Activated naive CD4-positive, alpha-beta T cell treated with anti-CD3 and anti-CD28 coated beads, Interleukin-2, amount 10 ng/mL, durations not matched to agents 7 days and 5 days (primary cell): ENCODE measurements at regions of chr9 and their contacts with region 1.

Region 1: DNA sequence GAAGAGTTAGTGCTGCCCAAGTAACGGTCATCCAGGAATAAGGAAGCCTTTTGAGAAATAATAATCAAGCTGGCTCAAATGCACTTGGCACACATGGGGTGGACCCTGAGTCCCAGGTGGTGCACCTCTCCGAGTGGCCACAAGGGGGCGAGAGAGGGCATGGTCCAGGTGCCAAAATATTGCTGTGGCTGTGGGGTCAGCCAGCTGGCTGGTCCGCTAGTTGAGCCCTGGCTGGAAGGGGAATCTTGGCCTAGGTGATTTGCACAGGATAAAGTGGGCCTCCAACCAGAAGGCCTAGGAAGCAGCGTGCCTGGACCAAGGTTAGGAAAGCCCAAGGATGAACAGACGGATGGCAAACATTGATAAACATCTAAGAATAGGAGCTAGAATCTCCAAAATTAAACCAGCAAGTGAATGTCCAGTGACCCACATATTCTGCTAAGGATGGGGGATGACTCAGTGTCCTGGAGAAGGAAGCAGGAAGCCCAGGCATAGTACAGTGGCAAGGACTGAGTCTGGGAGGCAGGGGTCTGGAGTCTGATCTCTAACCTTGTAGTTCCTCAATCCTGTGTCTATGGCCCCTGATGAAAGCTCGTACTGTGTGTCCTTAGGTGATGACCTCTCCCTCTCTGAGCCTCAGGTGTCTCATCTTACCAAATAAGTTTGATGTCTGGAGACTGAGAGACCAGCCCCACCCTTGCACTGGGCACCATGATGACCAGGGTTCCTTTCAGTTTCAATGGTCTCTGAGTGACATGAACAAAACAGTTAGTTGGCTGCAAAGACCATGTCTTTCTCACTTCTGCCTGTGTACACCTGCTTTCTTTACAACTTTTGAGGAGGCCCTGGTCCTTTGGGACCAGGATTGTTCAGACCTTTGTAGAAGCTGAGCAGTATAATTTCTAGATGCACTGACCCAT is 19.2 kb upstream of the SHB start:
- DNase-seq: peak; percentile 78
- H3K4me3 Mint-ChIP-seq: no peak overlapping the region
- H3K27ac Mint-ChIP-seq: no peak overlapping the region
- H3K4me1 Mint-ChIP-seq: no peaks in the 10 kb centered on the region
- H3K27me3 Mint-ChIP-seq: peaks cover 37% of the 10 kb centered on the region

Region 2: GRCh38 chr9:37913480-37914153 is 174.6 kb before region 1 on chr9:
- CTCF ChIA-PET with region 1: interaction called, 25 read pairs
- DNase-seq: peak; percentile 86
- H3K4me3 Mint-ChIP-seq: no peak overlapping the region
- H3K27ac Mint-ChIP-seq: no peak overlapping the region
- H3K4me1 Mint-ChIP-seq: no peaks in the 10 kb centered on the region
- H3K27me3 Mint-ChIP-seq: no peaks in the 10 kb centered on the region

Region 3: GRCh38 chr9:38035873-38036272 is 52.4 kb before region 1 on chr9:
- CTCF ChIA-PET with region 1: no interaction called
- DNase-seq: no peak
- H3K4me3 Mint-ChIP-seq: no peak overlapping the region
- H3K27ac Mint-ChIP-seq: no peak overlapping the region
- H3K4me1 Mint-ChIP-seq: no peaks in the 10 kb centered on the region
- H3K27me3 Mint-ChIP-seq: peaks cover 14% of the 10 kb centered on the region

Region 4: GRCh38 chr9:38066197-38066913 is 21.9 kb before region 1 on chr9:
- CTCF ChIA-PET with region 1: no interaction called
- DNase-seq: no peak
- H3K4me3 Mint-ChIP-seq: peak overlapping the region; percentile 75
- H3K27ac Mint-ChIP-seq: no peak overlapping the region
- H3K4me1 Mint-ChIP-seq: peaks cover 27% of the 10 kb centered on the region
- H3K27me3 Mint-ChIP-seq: peaks cover 61% of the 10 kb centered on the region

Region 5: GRCh38 chr9:38107811-38108304 is 19.6 kb after region 1 on chr9:
- CTCF ChIA-PET with region 1: interaction called, 10 read pairs
- DNase-seq: no peak
- H3K4me3 Mint-ChIP-seq: no peak overlapping the region
- H3K27ac Mint-ChIP-seq: no peak overlapping the region
- H3K4me1 Mint-ChIP-seq: no peaks in the 10 kb centered on the region
- H3K27me3 Mint-ChIP-seq: peaks cover 8% of the 10 kb centered on the region

Region 6: GRCh38 chr9:38160613-38161215 is 72.4 kb after region 1 on chr9:
- CTCF ChIA-PET with region 1: interaction called, 10 read pairs
- DNase-seq: peak; percentile 73
- H3K4me3 Mint-ChIP-seq: no peak overlapping the region
- H3K27ac Mint-ChIP-seq: no peak overlapping the region
- H3K4me1 Mint-ChIP-seq: peaks cover 3% of the 10 kb centered on the region
- H3K27me3 Mint-ChIP-seq: peaks cover 11% of the 10 kb centered on the region

Region 7: DNA sequence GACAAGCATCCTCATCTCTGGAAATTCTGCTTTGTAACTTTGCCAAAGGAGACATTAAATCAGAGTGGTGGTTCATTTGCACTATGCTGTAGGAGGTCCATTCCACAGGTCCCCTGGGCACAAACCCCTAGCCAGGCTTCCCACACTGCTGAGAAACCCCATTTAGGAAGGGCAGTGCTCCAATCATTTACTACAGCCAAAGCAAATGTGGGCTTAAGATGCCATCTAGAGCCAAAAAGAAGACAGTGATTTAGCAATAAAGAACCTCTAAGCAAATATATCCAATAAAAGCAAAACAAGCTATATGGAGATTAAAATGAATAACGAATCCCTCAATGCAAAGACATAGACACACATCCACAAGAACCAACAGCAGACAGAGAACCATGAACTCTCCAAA is 175.3 kb after region 1 on chr9:
- CTCF ChIA-PET with region 1: interaction called, 16 read pairs
- DNase-seq: no peak
- H3K4me3 Mint-ChIP-seq: no peak overlapping the region
- H3K27ac Mint-ChIP-seq: no peak overlapping the region
- H3K4me1 Mint-ChIP-seq: no peaks in the 10 kb centered on the region
- H3K27me3 Mint-ChIP-seq: peaks cover 21% of the 10 kb centered on the region